Activated CD4-positive, alpha-beta T cell treated with anti-CD3 and anti-CD28 coated beads, Interleukin-2, amount 10 ng/mL, durations not matched to agents 7 days and 5 days (primary cell): ENCODE measurements at regions of chr1 and their contacts with region 1.

Region 1: DNA sequence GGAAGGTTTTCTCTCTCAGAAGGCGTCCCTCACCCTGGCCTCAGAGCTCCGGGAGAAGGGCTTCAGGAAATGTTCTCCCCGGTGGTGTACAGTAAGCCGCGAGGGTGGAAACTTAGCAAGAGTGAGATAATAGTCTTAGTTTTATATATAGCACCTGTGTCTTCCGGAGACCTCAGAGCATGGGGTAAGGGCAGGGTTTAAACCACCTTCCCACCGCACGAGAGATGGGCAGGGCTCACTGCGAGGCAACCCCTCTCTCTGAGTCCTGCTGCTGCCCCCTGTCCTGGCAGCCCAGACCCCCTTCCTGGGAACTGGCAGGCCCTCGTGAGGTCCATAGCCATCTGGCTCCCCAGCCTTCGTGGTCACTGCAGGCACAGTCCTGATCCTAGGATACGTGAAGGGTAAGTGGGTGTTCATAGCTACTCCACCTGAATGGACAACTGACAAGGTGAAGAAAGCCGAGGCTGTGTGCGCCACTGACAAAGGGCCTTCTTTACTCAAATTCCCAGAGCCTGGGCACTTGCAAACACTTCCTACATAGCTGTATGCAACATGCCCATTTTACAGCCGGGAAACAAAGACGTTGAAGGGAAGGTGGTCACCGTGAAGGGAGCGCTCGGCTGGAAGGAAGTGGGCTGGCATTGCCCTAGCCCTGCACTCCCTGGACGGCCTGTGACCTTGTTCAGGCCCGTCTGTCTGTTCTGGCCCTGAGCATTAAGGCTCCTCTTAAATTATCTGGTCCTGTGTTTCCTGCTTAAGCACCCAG is 26.9 kb downstream of the ITPKB start:
- DNase-seq: peak; percentile 78
- H3K4me3 Mint-ChIP-seq: peak overlapping the region; percentile 68
- H3K27ac Mint-ChIP-seq: peak overlapping the region; percentile 84
- H3K4me1 Mint-ChIP-seq: peaks cover 90% of the 10 kb centered on the region
- H3K27me3 Mint-ChIP-seq: peaks cover 2% of the 10 kb centered on the region

Region 2: DNA sequence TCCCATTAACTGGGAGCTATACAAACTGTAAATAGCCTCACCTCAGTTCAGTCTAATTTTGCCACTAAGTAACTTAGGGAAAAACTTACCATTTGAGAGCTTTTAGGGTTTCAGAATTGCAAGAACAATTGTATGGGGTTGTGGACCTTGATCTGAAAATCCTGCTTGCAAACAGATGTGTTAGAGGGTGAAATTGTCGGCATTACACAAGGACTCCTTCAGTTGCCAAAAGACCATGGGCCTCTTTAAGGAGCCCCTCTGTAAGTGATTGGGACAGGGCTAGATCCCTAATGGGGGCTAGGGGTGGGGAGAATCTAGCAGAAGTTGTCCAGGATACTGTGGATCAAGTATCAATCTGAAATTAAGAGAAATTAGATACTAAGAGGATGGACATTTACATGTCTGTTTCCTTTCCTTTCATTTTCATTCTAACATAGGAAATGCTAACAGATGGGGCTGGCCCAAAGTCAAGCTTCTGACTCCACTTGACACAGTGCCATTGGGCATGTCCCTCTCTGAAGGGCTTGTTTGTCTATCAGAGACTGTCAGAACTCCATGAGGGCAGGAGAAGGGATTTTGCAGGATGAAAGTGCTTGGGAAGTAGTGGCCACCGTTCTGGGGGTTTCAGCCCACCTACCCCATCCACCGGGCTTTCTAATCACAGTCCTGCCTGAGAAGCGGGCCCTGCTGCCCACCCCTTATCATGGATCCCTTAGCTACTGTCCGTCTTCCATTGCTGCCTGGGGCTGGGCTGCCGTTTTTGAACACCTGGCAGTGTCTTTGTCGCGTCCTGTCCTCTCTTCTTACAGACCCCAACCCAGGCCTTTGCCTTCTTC is 108.9 kb before region 1 on chr1:
- CTCF ChIA-PET with region 1: no interaction called
- POLR2A ChIA-PET with region 1: no interaction called
- DNase-seq: no peak
- H3K4me3 Mint-ChIP-seq: no peak overlapping the region
- H3K27ac Mint-ChIP-seq: no peak overlapping the region
- H3K4me1 Mint-ChIP-seq: peaks cover 2% of the 10 kb centered on the region
- H3K27me3 Mint-ChIP-seq: peaks cover 11% of the 10 kb centered on the region

Region 3: GRCh38 chr1:226731257-226731893 is 19.2 kb after region 1 on chr1:
- CTCF ChIA-PET with region 1: interaction called, 20 read pairs
- POLR2A ChIA-PET with region 1: interaction called, 3 read pairs
- DNase-seq: no peak
- H3K4me3 Mint-ChIP-seq: peak overlapping the region; percentile 87
- H3K27ac Mint-ChIP-seq: peak overlapping the region; percentile 76
- H3K4me1 Mint-ChIP-seq: peaks cover 95% of the 10 kb centered on the region
- H3K27me3 Mint-ChIP-seq: no peaks in the 10 kb centered on the region